PC-3 (cell line): ENCODE measurements at regions of chr9 and their contacts with region 1.

Region 1: GRCh38 chr9:136991993-136992818 is at the start of gene PAXX:
- DNase-seq: peak; percentile 82
- ATAC-seq: peak; percentile 71
- H3K4me3 ChIP-seq: peak within 1 kb of the TSS; percentile 89
- H3K27ac ChIP-seq: peak within 1 kb of the TSS; percentile 59
- H3K4me1 ChIP-seq: peaks cover 24% of the 10 kb centered on the region
- H3K27me3 ChIP-seq: no peaks in the 10 kb centered on the region
- CTCF ChIP-seq: no peak
- total RNA-seq, gene PAXX: 113 and 137 TPM in 2 replicates

Region 2: GRCh38 chr9:136849038-136849959 is 142.9 kb before region 1 on chr9 and contains the start of gene PHPT1:
- CTCF ChIA-PET with region 1: no interaction called
- POLR2A ChIA-PET with region 1: no interaction called
- intact Hi-C with region 1: loop called (anchors 10 kb)
- DNase-seq: peak; percentile 97
- ATAC-seq: peak; percentile 66
- H3K4me3 ChIP-seq: peak within 1 kb of the TSS; percentile 87
- H3K27ac ChIP-seq: peak within 1 kb of the TSS; percentile 79
- H3K4me1 ChIP-seq: peaks cover 8% of the 10 kb centered on the region
- H3K27me3 ChIP-seq: no peaks in the 10 kb centered on the region
- CTCF ChIP-seq: no peak
- total RNA-seq, gene PHPT1: 83.2 and 111 TPM in 2 replicates

Region 3: DNA sequence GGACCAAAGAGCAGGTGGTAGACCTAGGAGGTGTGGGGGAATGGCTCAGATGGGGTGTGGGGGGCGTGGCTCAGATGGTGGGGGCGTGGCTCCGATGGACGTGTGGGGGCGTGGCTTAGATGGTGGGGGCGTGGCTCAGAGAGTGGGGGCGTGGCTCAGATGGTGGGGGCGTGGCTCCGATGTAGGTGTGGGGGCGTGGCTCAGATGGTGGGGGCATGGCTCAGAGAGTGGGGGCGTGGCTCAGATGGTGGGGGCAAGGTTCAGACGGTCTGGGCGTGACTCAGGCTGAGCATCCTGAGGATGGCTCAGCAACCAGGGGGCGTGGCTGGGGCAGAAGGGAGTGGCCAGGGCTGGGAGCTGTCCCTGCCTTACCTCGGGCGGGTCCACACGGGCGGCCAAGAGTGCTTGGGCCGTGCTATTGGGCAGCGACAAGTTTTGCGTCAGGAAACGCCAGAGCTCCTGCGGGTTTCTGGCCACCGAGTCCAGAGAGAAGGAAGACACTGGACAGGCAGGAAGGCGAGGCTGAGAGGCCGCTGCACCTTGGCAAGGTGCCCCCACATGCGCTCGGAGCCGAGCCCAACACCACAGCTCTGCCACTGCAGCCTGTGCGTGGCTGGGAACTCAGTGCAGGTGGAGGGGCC is 29.9 kb after region 1 on chr9:
- CTCF ChIA-PET with region 1: no interaction called
- POLR2A ChIA-PET with region 1: interaction called, 14 read pairs
- intact Hi-C with region 1: no loop called
- DNase-seq: peak; percentile 88
- ATAC-seq: peak; percentile 99
- H3K4me3 ChIP-seq: no peak overlapping the region
- H3K27ac ChIP-seq: no peak overlapping the region
- H3K4me1 ChIP-seq: peaks cover 7% of the 10 kb centered on the region; the same call in 1 of the 2 replicates
- H3K27me3 ChIP-seq: no peaks in the 10 kb centered on the region
- CTCF ChIP-seq: no peak